AG04450 (cell line): ENCODE measurements at regions of chr3 and their contacts with region 1.

Region 1: DNA sequence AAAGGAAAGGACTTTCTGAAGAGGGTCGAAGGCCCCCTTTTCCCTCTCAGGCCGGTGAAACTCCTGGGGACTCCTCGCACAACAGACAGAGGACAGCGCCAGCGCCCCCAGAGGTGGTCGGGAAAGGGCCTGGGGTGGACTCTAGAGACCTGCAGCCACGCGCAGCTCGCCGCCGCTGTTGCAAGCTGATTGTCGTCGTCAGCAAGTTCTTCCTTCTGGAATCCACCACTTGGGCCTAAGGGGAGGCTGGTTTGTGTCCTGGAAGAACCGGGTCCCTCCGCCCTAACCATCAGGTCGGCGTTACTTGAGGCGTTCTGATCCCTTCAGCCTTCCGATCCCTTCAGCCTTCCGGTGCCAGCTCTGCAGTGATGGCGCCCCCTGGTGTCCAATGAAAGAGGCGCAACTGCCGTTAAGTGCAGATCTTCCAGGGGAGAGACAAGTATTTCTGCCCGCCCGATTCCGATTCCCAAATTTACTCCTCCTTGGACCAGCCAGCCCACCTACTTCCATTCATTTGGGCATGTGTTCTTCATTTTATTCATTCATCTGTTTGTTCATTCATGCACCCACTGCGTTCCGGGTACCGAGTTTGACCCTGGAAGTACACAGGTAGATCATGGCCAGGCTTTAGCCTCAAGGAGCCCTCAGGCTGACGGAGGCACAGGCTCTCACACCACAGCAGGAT is 77.2 kb upstream of the SLC6A11 start:
- DNase-seq: peak; percentile 34
- H3K4me3 ChIP-seq: peak overlapping the region; percentile 47
- H3K27ac ChIP-seq: no peak overlapping the region
- H3K27me3 ChIP-seq: peaks cover 2% of the 10 kb centered on the region
- CTCF ChIP-seq: peak; percentile 82

Region 2: DNA sequence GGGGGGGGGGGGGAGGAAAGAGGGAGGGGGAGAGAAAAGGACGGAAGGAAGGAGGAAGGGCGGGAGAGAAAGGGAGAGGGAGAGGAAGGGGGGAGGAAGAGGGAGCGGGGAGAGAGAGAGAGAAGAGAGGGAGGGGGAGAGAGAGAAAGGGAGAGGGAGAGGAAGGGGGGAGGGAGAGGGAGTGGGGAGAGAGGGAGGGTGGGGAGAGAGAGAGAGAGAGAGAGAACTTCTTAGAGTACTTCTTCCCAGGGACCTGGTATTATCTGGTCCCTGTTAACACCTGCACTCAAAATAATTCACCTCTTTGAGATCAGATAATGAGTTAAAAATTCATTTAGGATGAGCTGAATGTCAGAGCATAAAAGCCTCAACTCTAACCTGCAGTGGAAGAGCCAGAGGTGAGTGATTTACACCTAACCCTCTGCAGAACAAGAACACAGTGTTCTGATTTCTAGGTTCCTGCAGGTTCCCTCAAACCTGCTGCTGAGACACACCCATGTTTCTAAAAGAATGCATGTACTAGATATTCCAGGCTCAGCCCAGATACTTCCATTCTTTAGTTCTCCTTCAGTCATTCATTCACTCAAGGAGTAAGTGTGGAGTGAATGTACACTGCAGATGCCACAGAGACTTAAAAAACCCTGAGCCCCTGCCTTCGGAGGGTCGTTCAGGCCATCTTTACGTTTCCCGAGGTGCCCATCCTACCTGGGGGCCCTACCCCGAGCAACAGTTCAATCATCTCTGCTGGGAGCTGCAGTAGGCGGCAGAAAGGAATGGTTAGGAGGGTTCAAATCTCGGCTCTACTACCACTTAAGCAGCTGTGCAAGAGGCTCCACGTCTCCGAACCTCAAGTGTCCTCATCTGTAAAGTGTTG is 418.8 kb before region 1 on chr3:
- CTCF ChIA-PET with region 1: interaction called, 10 read pairs
- POLR2A ChIA-PET with region 1: no interaction called
- DNase-seq: no peak
- H3K4me3 ChIP-seq: peak overlapping the region; percentile 95
- H3K27ac ChIP-seq: peak overlapping the region; percentile 93
- H3K27me3 ChIP-seq: peaks cover 8% of the 10 kb centered on the region
- CTCF ChIP-seq: no peak

Region 3: GRCh38 chr3:10344147-10344943 is 394.5 kb before region 1 on chr3:
- CTCF ChIA-PET with region 1: interaction called, 28 read pairs
- POLR2A ChIA-PET with region 1: no interaction called
- DNase-seq: no peak
- H3K4me3 ChIP-seq: no peak overlapping the region
- H3K27ac ChIP-seq: no peak overlapping the region
- H3K27me3 ChIP-seq: peaks cover 16% of the 10 kb centered on the region
- CTCF ChIP-seq: peak; percentile 93

Region 4: DNA sequence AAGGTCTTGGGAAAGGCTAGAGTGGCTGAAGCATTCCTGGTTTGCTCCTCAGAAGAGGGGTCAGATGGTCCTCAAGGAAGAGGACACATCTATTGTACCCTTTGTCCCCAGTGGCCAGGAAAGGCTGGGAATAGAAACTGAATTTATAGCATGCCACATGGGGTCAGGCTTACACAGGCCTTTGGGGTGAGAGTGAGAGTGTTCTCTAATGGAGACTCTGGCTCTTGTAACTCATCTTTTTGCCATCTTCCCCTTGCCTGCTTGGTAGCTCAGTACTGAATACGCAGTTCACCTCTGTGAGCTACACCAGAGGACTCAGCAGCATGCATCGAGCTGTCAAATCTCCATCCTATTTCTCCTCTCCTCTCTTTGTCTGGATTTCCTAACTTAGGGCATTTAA is 321.0 kb before region 1 on chr3:
- CTCF ChIA-PET with region 1: interaction called, 12 read pairs
- POLR2A ChIA-PET with region 1: no interaction called
- DNase-seq: no peak
- H3K4me3 ChIP-seq: no peak overlapping the region
- H3K27ac ChIP-seq: no peak overlapping the region
- H3K27me3 ChIP-seq: peaks cover 46% of the 10 kb centered on the region
- CTCF ChIP-seq: peak; percentile 37; the same call in 1 of the 2 replicates